B cell (primary cell): ENCODE measurements at regions of chr17 and their contacts with region 1.

Region 1: DNA sequence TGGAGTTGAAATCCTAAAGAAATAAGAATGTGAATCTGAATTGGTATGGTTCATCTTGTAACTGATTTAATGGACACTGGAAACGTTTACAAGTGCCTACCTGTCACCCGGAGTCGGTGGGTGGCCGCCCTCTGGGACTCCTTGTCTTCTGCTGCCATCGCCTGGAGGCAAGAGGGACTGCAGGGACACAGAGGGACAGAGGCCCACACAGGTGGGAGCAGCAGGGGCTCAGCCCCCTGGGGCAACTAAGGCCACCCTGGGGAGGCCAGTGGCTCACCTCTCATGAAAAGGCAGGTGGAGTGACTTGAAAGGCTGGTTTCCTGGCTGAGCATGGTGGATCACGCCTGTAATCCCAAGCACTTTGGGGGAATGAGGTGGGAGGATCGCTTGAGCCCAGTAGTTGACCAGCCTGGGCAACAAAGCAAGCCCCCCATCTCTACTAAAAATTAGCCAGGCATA is 23.2 kb downstream of the TMEM92 start:
- DNase-seq: peak; percentile 81
- ATAC-seq: peak; percentile 99
- H3K4me3 ChIP-seq: no peak overlapping the region
- H3K4me3 Mint-ChIP-seq: no peak overlapping the region
- H3K27ac ChIP-seq: no peak overlapping the region
- H3K27ac Mint-ChIP-seq: peak overlapping the region; percentile 43
- H3K4me1 ChIP-seq: no peaks in the 10 kb centered on the region
- H3K4me1 Mint-ChIP-seq: no peaks in the 10 kb centered on the region
- H3K27me3 ChIP-seq: no peaks in the 10 kb centered on the region
- H3K27me3 Mint-ChIP-seq: peaks cover 20% of the 10 kb centered on the region
- CTCF ChIP-seq: peak; percentile 92

Region 2: DNA sequence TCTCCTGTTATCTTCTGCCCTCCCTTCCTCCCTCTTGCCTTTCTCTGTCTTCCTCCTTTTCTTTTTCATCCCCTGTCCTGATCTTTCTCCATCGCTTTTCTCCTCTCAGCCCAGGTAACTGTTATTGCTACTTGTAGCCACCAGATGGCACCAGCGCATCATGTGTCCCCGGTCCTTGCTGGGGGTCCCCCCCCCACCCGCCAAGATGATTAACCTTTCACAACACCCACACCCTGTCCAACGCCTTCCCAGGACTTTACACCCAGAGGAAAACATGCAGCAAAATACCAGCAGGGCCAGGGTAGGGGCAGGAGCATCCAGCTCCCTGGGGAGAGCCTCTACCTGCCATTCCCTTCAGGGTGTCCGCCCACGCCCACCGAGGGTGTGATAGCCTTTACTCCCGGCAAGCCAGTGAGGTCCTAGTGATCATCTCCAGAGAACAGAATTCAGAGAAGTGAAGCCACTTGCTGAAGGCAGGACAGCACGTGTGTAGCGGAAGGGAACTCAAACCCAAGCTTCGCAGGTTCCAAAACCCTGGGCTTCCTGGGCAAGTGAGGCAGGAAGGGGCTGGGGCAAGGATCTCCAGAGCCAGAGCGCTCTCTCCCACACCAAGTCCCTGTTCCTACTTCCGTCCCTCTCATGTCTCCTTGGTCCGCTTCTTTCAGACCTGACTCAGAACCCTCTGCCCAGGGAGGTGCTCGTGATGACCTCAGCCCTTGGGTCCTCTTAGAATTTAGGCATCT is 436.1 kb before region 1 on chr17:
- CTCF ChIA-PET with region 1: interaction called, 5 read pairs
- POLR2A ChIA-PET with region 1: no interaction called
- intact Hi-C with region 1: loop called (anchors 10 kb)
- DNase-seq: peak; percentile 78
- ATAC-seq: peak; percentile 76
- H3K4me3 ChIP-seq: no peak overlapping the region
- H3K4me3 Mint-ChIP-seq: no peak overlapping the region
- H3K27ac ChIP-seq: no peak overlapping the region
- H3K27ac Mint-ChIP-seq: no peak overlapping the region
- H3K4me1 ChIP-seq: no peaks in the 10 kb centered on the region
- H3K4me1 Mint-ChIP-seq: peaks cover 3% of the 10 kb centered on the region
- H3K27me3 ChIP-seq: peaks cover 0 to 31% (median 3%) of the 10 kb centered on the region in 4 experiments
- H3K27me3 Mint-ChIP-seq: peaks cover 34% of the 10 kb centered on the region
- CTCF ChIP-seq: peak; percentile 93

Region 3: GRCh38 chr17:50026901-50027630 is 270.4 kb before region 1 on chr17:
- CTCF ChIA-PET with region 1: interaction called, 15 read pairs
- POLR2A ChIA-PET with region 1: no interaction called
- intact Hi-C with region 1: loop called (anchors 1 kb)
- DNase-seq: peak; percentile 77
- ATAC-seq: peak; percentile 88
- H3K4me3 ChIP-seq: peak overlapping the region in 1 of 5 experiments; percentile 15
- H3K4me3 Mint-ChIP-seq: peak overlapping the region; percentile 59
- H3K27ac ChIP-seq: no peak overlapping the region
- H3K27ac Mint-ChIP-seq: peak overlapping the region; percentile 71
- H3K4me1 ChIP-seq: peaks cover 10 to 13% of the 10 kb centered on the region in 2 donors
- H3K4me1 Mint-ChIP-seq: peaks cover 11% of the 10 kb centered on the region
- H3K27me3 ChIP-seq: peaks cover 0 to 31% (median 13%) of the 10 kb centered on the region in 4 experiments
- H3K27me3 Mint-ChIP-seq: peaks cover 38% of the 10 kb centered on the region
- CTCF ChIP-seq: peak; percentile 91

Region 4: DNA sequence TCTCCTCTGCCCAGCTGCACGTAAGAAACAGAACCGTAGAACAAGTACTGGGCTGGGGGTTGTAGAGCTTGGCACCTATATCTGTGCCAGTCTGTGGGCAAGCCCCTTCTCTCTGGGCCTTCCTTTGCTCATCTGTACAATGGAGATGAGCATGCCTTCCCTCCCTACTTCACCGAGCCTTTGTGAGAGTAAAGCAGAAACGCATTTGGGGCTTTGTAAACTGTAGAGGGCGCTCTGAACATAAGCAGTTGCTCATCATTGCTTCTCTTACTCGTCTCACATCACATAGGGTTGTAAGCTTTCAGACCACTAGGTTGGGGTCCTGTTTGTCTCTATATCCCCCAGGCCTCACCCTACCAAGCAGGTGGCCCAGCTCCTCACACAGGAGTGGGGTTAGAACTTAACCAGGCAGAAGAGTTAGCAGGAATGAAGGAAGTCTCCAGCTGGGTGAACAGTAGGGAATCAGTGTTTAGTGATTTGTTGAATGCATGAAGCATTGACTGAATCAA is 182.5 kb before region 1 on chr17:
- CTCF ChIA-PET with region 1: interaction called, 13 read pairs
- POLR2A ChIA-PET with region 1: no interaction called
- intact Hi-C with region 1: loop called (anchors 1 kb)
- DNase-seq: peak; percentile 66
- ATAC-seq: peak; percentile 20
- H3K4me3 ChIP-seq: no peak overlapping the region
- H3K4me3 Mint-ChIP-seq: peak overlapping the region; percentile 48
- H3K27ac ChIP-seq: no peak overlapping the region
- H3K27ac Mint-ChIP-seq: no peak overlapping the region
- H3K4me1 ChIP-seq: peaks cover 10 to 20% of the 10 kb centered on the region in 2 donors
- H3K4me1 Mint-ChIP-seq: peaks cover 14% of the 10 kb centered on the region
- H3K27me3 ChIP-seq: peaks cover 0 to 46% (median 16%) of the 10 kb centered on the region in 4 experiments
- H3K27me3 Mint-ChIP-seq: peaks cover 45% of the 10 kb centered on the region
- CTCF ChIP-seq: peak; percentile 72

Region 5: GRCh38 chr17:50169121-50169764 is 128.2 kb before region 1 on chr17:
- CTCF ChIA-PET with region 1: interaction called, 24 read pairs
- POLR2A ChIA-PET with region 1: no interaction called
- intact Hi-C with region 1: loop called (anchors 1 kb)
- DNase-seq: peak; percentile 91
- ATAC-seq: peak; percentile 84
- H3K4me3 ChIP-seq: peak overlapping the region in 4 of 5 experiments; percentile 12 to 44 (median 29)
- H3K4me3 Mint-ChIP-seq: peak overlapping the region; percentile 64
- H3K27ac ChIP-seq: no peak overlapping the region
- H3K27ac Mint-ChIP-seq: peak overlapping the region; percentile 74
- H3K4me1 ChIP-seq: peaks cover 16 to 27% of the 10 kb centered on the region in 2 donors
- H3K4me1 Mint-ChIP-seq: peaks cover 13% of the 10 kb centered on the region
- H3K27me3 ChIP-seq: no peaks in the 10 kb centered on the region
- H3K27me3 Mint-ChIP-seq: no peaks in the 10 kb centered on the region
- CTCF ChIP-seq: peak; percentile 66

Region 6: DNA sequence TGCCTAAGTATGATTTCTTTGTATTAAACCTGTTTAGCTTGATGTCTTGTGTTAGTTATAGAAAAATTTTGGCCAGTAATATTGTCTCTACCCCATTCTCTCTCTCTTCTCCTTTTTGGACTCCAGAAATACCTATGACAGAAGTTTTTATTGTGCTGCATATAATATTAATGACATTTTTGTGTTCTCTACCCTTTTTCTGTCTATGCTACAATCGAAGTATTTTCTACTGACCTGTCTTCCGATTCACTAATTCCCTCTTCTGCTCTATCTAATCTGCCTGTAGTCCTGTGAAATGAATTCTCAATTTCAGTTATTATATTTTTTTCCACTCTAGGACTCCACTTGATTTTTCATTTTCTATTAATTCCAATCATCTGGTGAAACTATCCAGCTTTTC is 49.2 kb before region 1 on chr17:
- CTCF ChIA-PET with region 1: no interaction called
- POLR2A ChIA-PET with region 1: no interaction called
- intact Hi-C with region 1: no loop called
- DNase-seq: no peak
- ATAC-seq: no peak
- H3K4me3 ChIP-seq: no peak overlapping the region
- H3K4me3 Mint-ChIP-seq: no peak overlapping the region
- H3K27ac ChIP-seq: no peak overlapping the region
- H3K27ac Mint-ChIP-seq: no peak overlapping the region
- H3K4me1 ChIP-seq: no peaks in the 10 kb centered on the region
- H3K4me1 Mint-ChIP-seq: no peaks in the 10 kb centered on the region
- H3K27me3 ChIP-seq: peaks cover 0 to 7% (median 5%) of the 10 kb centered on the region in 4 experiments
- H3K27me3 Mint-ChIP-seq: peaks cover 43% of the 10 kb centered on the region
- CTCF ChIP-seq: no peak

Region 7: DNA sequence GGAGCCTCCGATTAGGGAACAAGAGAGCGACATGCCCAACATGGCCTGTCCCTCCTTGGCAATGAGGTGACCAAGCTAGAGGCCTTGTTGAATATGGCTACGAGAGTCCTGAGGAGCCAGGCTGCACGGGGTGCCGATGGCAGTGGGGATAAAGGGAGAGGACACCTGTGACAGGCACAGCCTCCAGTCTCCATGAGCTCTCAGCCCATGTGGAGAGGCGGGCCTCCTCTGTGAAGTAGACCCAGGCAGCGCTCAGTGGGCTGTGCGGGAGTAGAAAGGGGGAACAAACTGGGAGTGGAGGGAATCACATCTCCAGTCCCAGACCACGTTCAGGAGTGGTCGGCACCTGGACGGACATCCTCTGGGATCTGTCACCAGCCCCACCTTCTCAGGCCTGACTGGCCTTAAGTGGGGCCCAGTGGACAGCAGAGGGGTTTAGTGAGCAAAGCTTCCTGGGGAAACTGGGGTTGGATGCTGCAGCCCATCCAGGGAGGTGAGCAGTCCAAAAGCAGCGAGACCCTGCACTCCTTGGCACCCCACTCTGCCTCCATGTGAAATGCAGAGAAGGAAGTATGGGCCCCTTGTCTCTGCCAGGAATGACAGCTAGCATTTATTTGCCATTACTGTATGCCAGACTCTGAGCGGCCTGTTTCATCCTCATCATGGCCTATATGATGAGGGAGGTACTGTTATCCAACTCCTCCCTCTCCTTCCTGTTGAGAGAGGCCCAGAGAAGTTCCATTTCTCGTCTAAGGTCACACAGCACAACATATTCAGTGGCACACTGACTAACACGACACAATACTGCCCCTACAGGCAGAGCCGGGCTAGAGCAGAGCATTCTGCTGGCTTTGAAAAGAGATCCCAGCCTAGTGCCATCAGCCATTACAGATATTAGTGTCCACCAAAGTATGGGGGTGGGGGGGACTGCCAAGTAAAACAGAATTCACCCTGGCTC is 27.7 kb before region 1 on chr17:
- CTCF ChIA-PET with region 1: interaction called, 17 read pairs
- POLR2A ChIA-PET with region 1: interaction called, 3 read pairs
- intact Hi-C with region 1: loop called (anchors 1 kb)
- DNase-seq: peak; percentile 60
- ATAC-seq: peak; percentile 56
- H3K4me3 ChIP-seq: no peak overlapping the region
- H3K4me3 Mint-ChIP-seq: no peak overlapping the region
- H3K27ac ChIP-seq: no peak overlapping the region
- H3K27ac Mint-ChIP-seq: no peak overlapping the region
- H3K4me1 ChIP-seq: peaks cover 7 to 8% of the 10 kb centered on the region in 2 donors
- H3K4me1 Mint-ChIP-seq: peaks cover 7% of the 10 kb centered on the region
- H3K27me3 ChIP-seq: peaks cover 0 to 28% (median 9%) of the 10 kb centered on the region in 4 experiments
- H3K27me3 Mint-ChIP-seq: peaks cover 27% of the 10 kb centered on the region
- CTCF ChIP-seq: peak; percentile 76